Caco-2 (cell line): ENCODE measurements at regions of chr4 and their contacts with region 1.

Region 1: DNA sequence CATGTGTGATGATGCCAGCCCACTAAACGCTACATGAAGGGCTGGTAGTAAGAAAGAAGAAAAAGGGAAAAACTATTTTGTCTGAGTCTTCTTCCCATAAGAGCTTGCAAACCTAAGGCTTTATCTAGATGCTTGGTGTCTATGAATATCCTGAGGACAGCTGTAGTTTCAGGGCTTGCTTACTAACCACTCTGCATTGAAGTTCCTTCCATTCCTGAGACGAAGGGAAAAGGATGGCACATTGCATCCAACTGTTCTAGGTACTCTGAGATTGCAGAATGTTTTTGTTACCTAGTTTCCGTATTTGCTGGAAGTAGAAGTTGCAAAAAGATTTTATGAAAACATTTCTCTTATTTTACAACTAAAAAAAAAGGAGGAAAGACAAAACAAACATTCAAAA is 544.6 kb downstream of the IL15 start:
- DNase-seq: no peak
- H3K4me3 ChIP-seq: no peak overlapping the region
- H3K4me3 Mint-ChIP-seq: no peak overlapping the region
- H3K27ac Mint-ChIP-seq: no peak overlapping the region
- H3K4me1 ChIP-seq: no peaks in the 10 kb centered on the region
- H3K4me1 Mint-ChIP-seq: no peaks in the 10 kb centered on the region
- H3K27me3 ChIP-seq: no peaks in the 10 kb centered on the region
- H3K27me3 Mint-ChIP-seq: no peaks in the 10 kb centered on the region
- CTCF ChIP-seq: no peak

Region 2: GRCh38 chr4:142160509-142160908 is 20.5 kb before region 1 on chr4:
- CTCF ChIA-PET with region 1: no interaction called
- POLR2A ChIA-PET with region 1: no interaction called
- intact Hi-C with region 1: loop called (anchors 1 kb)
- DNase-seq: no peak
- H3K4me3 ChIP-seq: no peak overlapping the region
- H3K4me3 Mint-ChIP-seq: no peak overlapping the region
- H3K27ac Mint-ChIP-seq: no peak overlapping the region
- H3K4me1 ChIP-seq: no peaks in the 10 kb centered on the region
- H3K4me1 Mint-ChIP-seq: no peaks in the 10 kb centered on the region
- H3K27me3 ChIP-seq: no peaks in the 10 kb centered on the region
- H3K27me3 Mint-ChIP-seq: no peaks in the 10 kb centered on the region
- CTCF ChIP-seq: no peak